ENCODE measurements at regions of chr7 and their contacts with region 1.

Region 1: GRCh38 chr7:32846701-32847100 is 44.9 kb downstream of the KBTBD2 start:
- DNase-seq: peak; percentile 91
- H3K4me3 ChIP-seq: no peak overlapping the region
- H3K27ac ChIP-seq: no peak overlapping the region
- H3K4me1 ChIP-seq: no peaks in the 10 kb centered on the region
- H3K27me3 ChIP-seq: no peaks in the 10 kb centered on the region
- CTCF ChIP-seq: peak; percentile 86

Region 2: GRCh38 chr7:32942786-32943653 is 96.3 kb after region 1 on chr7:
- intact Hi-C with region 1: loop called (anchors 5 kb)
- DNase-seq: peak; percentile 88
- H3K4me3 ChIP-seq: peak overlapping the region; percentile 87
- H3K27ac ChIP-seq: peak overlapping the region; percentile 98
- H3K4me1 ChIP-seq: no peaks in the 10 kb centered on the region
- H3K27me3 ChIP-seq: no peaks in the 10 kb centered on the region
- CTCF ChIP-seq: peak; percentile 33

Region 3: GRCh38 chr7:33050535-33051318 is 204.0 kb after region 1 on chr7:
- intact Hi-C with region 1: loop called (anchors 2 kb)
- DNase-seq: peak; percentile 56
- H3K4me3 ChIP-seq: no peak overlapping the region
- H3K27ac ChIP-seq: peak overlapping the region; percentile 34
- H3K4me1 ChIP-seq: peaks cover 5% of the 10 kb centered on the region
- H3K27me3 ChIP-seq: no peaks in the 10 kb centered on the region
- CTCF ChIP-seq: peak; percentile 58

Measured in colonic mucosa (tissue), 4 donors.